ENCODE measurements at regions of chr11 and their contacts with region 1.

Region 1: DNA sequence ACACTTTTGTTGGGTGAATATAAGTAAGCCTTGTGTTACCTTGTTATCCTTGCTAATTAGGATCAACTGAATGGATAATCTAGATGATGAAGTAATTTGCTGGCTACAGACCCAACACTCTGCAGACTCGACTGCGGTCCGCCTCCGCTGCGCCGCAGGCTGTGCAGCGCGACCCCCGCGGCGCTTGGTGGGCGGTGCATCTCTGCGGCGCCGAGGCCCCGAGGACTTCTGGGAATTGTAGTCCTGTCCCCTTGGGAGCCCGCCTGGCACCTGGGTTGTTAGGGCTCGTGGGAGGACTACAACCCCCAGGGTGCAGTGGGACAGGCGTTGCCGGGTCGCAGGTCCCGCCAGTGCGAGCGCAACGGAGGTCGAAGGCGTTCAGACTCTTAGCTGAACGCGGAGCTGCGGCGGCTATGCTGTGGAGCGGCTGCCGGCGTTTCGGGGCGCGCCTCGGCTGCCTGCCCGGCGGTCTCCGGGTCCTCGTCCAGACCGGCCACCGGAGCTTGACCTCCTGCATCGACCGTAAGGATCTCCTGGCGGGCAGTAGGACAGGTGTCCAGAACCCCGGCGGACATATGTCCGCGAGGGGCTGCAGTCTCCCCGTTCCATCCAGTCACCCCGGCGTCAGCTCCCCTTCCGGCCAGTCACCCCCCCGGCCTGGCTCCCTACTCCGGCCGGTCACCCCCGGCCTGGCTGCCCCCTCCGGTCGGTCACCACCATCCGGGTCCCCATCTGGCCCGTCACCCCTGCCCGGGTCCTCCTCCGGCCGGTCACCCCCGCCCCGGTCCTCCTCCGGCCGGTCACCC is at the starts of genes ACAD8 and THYN1:
- DNase-seq: peak; percentile 98
- ATAC-seq: peak; percentile 99
- H3K4me3 Mint-ChIP-seq: peak within 1 kb of the TSS; percentile 90
- H3K27ac Mint-ChIP-seq: peak within 1 kb of the TSS; percentile 80
- H3K4me1 Mint-ChIP-seq: peaks cover 36% of the 10 kb centered on the region
- H3K27me3 Mint-ChIP-seq: no peaks in the 10 kb centered on the region
- total RNA-seq, gene ACAD8: 12.4 to 16.6 TPM
- total RNA-seq, gene THYN1: 75.5 to 89.5 TPM

Region 2: GRCh38 chr11:133947321-133947756 is 306.1 kb before region 1 on chr11:
- CTCF ChIA-PET with region 1: interaction called, 3 read pairs
- POLR2A ChIA-PET with region 1: no interaction called
- intact Hi-C with region 1: loop called in 1 of 2 experiments (anchors 1 kb)
- DNase-seq: peak; percentile 87
- ATAC-seq: peak; percentile 27
- H3K4me3 Mint-ChIP-seq: peak overlapping the region; percentile 65
- H3K27ac Mint-ChIP-seq: peak overlapping the region; percentile 85
- H3K4me1 Mint-ChIP-seq: peaks cover 75% of the 10 kb centered on the region
- H3K27me3 Mint-ChIP-seq: no peaks in the 10 kb centered on the region

Region 3: DNA sequence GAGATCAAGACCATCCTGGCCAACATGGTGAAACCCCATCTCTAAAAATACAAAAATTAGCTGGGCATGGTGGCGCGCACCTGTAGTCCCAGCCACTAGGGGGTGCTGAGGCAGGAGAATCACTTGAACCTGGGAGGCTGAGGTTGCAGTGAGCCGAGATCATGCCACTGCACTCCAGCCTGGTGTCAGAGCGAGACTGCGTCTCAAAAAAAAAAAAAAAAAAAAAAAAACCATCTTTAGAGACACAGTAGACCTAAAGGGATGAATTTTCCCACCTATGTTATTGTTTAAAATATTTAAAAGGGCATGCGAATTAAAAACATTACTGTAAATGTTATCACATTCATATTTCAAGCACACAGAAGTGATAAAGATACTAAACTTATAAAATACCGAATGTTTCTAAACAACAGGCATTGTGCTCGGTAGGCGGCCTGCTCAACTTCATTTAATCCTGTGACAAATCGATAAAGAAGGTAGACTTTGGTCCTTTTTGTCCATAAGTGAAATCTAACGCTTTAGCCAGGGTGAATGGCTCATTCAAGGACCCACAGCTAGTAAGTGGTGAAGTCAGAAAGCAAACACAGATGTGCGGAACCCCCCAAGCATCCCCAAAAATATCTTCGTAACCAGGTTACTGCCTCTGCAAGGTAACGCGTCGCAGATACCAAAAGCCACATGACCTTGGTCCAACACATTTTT is 45.7 kb before region 1 on chr11:
- CTCF ChIA-PET with region 1: interaction called, 4 read pairs
- POLR2A ChIA-PET with region 1: interaction called, 3 read pairs
- intact Hi-C with region 1: loop called (anchors 5 kb)
- DNase-seq: peak; percentile 81
- ATAC-seq: peak; percentile 33
- H3K4me3 Mint-ChIP-seq: no peak overlapping the region
- H3K27ac Mint-ChIP-seq: no peak overlapping the region
- H3K4me1 Mint-ChIP-seq: peaks cover 5% of the 10 kb centered on the region
- H3K27me3 Mint-ChIP-seq: no peaks in the 10 kb centered on the region

Region 4: GRCh38 chr11:134331354-134332188 is 78.2 kb after region 1 on chr11 and contains the start of gene GLB1L2:
- CTCF ChIA-PET with region 1: no interaction called
- POLR2A ChIA-PET with region 1: no interaction called
- intact Hi-C with region 1: loop called (anchors 1 to 5 kb)
- DNase-seq: peak; percentile 86
- ATAC-seq: peak; percentile 99
- H3K4me3 Mint-ChIP-seq: peak within 1 kb of the TSS; percentile 75
- H3K27ac Mint-ChIP-seq: peak within 1 kb of the TSS; percentile 64
- H3K4me1 Mint-ChIP-seq: peaks cover 12% of the 10 kb centered on the region
- H3K27me3 Mint-ChIP-seq: peaks cover 23% of the 10 kb centered on the region
- total RNA-seq, gene GLB1L2: 3.9 to 4.2 TPM

Measured in activated CD4-positive, alpha-beta T cell treated with anti-CD3 and anti-CD28 coated beads for 36 hours (primary cell).